Vagina (tissue), 2 donors: ENCODE measurements at regions of chr2 and their contacts with region 1.

Region 1: GRCh38 chr2:188678882-188679281 is 295.3 kb upstream of the COL3A1 start:
- DNase-seq: no peak
- H3K4me3 ChIP-seq: no peak overlapping the region
- H3K27ac ChIP-seq: no peak overlapping the region
- H3K4me1 ChIP-seq: no peaks in the 10 kb centered on the region
- H3K27me3 ChIP-seq: no peaks in the 10 kb centered on the region
- CTCF ChIP-seq: no peak
- POLR2A ChIP-seq: no peak

Region 2: DNA sequence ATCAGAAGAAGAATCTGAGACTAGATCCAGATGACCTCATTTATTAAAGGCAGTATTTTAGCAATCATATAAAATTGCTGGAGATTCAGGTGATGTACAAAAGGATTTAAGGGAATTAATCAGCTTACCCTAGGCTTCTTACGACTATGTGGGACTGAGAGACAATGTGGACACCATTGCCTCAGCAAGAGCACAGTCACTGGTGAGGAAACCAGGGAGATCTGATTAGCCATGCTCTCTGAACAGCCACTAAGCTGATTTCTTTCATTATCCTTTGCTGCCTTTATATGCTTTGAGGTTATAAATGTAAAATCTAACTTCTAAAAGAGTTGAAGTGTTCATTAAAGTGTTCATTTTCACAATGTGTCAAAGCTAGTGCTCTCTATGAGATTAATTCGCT is 409.9 kb before region 1 on chr2:
- intact Hi-C with region 1: loop called (anchors 5 kb)
- DNase-seq: no peak
- H3K4me3 ChIP-seq: no peak overlapping the region
- H3K27ac ChIP-seq: no peak overlapping the region
- H3K4me1 ChIP-seq: no peaks in the 10 kb centered on the region
- H3K27me3 ChIP-seq: no peaks in the 10 kb centered on the region
- CTCF ChIP-seq: no peak
- POLR2A ChIP-seq: no peak